ENCODE measurements at regions of chr3 and their contacts with region 1.

Region 1: GRCh38 chr3:31132132-31132769 is 237.8 kb upstream of the GADL1 start:
- DNase-seq: peak; percentile 42
- H3K4me3 ChIP-seq: no peak overlapping the region
- H3K27ac ChIP-seq: no peak overlapping the region
- H3K4me1 ChIP-seq: no peaks in the 10 kb centered on the region
- H3K27me3 ChIP-seq: no peaks in the 10 kb centered on the region
- CTCF ChIP-seq: peak; percentile 71 to 73

Region 2: DNA sequence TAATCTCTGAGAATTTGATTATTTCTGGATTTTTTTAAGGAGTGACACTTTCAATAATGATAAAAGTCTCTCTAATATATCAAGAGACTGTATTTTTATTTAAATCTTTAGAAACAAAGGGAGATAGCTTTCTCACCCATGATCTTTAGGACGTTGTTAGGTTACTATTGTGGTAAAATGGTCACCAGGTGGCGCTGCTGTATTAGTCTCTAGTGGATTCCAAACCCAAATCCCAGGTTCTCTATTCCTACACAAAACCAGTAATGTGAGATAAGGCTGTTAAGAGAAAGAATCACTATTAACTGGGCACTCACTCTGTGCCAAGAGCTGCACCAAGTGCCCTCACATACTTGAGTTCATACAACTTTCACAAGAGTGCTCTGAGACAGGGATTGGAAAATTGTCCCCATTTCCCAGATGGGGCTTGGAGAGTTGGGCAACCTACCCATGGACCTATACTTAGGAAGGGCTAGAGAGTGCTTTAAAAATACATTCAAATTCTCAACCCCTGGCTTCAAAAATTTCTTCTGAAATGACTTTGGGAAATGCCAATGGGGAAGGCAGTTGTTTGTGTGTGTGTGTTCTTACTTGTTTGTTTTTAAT is 1119.2 kb before region 1 on chr3:
- CTCF ChIA-PET with region 1: no interaction called
- dilution Hi-C with region 1: no loop called
- in situ Hi-C with region 1: loop called in 1 of 2 experiments (anchors 25 kb)
- intact Hi-C with region 1: no loop called
- DNase-seq: peak; percentile 58
- H3K4me3 ChIP-seq: no peak overlapping the region
- H3K27ac ChIP-seq: no peak overlapping the region
- H3K4me1 ChIP-seq: no peaks in the 10 kb centered on the region
- H3K27me3 ChIP-seq: no peaks in the 10 kb centered on the region
- CTCF ChIP-seq: peak; percentile 65 to 70

Region 3: GRCh38 chr3:30779686-30780287 is 352.5 kb before region 1 on chr3:
- CTCF ChIA-PET with region 1: no interaction called
- dilution Hi-C with region 1: no loop called
- in situ Hi-C with region 1: loop called in 1 of 2 experiments (anchors 10 kb)
- intact Hi-C with region 1: loop called (anchors 1 kb)
- DNase-seq: peak; percentile 25
- H3K4me3 ChIP-seq: no peak overlapping the region
- H3K27ac ChIP-seq: no peak overlapping the region
- H3K4me1 ChIP-seq: no peaks in the 10 kb centered on the region
- H3K27me3 ChIP-seq: peaks cover 5% of the 10 kb centered on the region
- CTCF ChIP-seq: peak; percentile 51 to 60

Region 4: GRCh38 chr3:30934208-30934550 is 198.1 kb before region 1 on chr3:
- CTCF ChIA-PET with region 1: interaction called, 7 read pairs
- dilution Hi-C with region 1: no loop called
- in situ Hi-C with region 1: loop called in 1 of 2 experiments (anchors 10 kb)
- intact Hi-C with region 1: loop called (anchors 1 kb)
- DNase-seq: peak; percentile 27
- H3K4me3 ChIP-seq: no peak overlapping the region
- H3K27ac ChIP-seq: no peak overlapping the region
- H3K4me1 ChIP-seq: no peaks in the 10 kb centered on the region
- H3K27me3 ChIP-seq: no peaks in the 10 kb centered on the region
- CTCF ChIP-seq: peak; percentile 69 to 70

Region 5: GRCh38 chr3:31166249-31166885 is 34.1 kb after region 1 on chr3:
- CTCF ChIA-PET with region 1: interaction called, 10 read pairs
- dilution Hi-C with region 1: no loop called
- in situ Hi-C with region 1: no loop called
- intact Hi-C with region 1: no loop called
- DNase-seq: peak; percentile 50
- H3K4me3 ChIP-seq: no peak overlapping the region
- H3K27ac ChIP-seq: no peak overlapping the region
- H3K4me1 ChIP-seq: peaks cover 25% of the 10 kb centered on the region
- H3K27me3 ChIP-seq: no peaks in the 10 kb centered on the region
- CTCF ChIP-seq: no peak

Measured in mammary epithelial cell (primary cell).